BJ (cell line): ENCODE measurements at regions of chr1 and their contacts with region 1.

Region 1: GRCh38 chr1:1943834-1944570 is 24.9 kb upstream of the TMEM52 start:
- DNase-seq: no peak
- H3K4me3 ChIP-seq: no peak overlapping the region
- H3K27me3 ChIP-seq: peaks cover 3% of the 10 kb centered on the region; the same call in 1 of the 2 replicates
- CTCF ChIP-seq: peak; percentile 88

Region 2: DNA sequence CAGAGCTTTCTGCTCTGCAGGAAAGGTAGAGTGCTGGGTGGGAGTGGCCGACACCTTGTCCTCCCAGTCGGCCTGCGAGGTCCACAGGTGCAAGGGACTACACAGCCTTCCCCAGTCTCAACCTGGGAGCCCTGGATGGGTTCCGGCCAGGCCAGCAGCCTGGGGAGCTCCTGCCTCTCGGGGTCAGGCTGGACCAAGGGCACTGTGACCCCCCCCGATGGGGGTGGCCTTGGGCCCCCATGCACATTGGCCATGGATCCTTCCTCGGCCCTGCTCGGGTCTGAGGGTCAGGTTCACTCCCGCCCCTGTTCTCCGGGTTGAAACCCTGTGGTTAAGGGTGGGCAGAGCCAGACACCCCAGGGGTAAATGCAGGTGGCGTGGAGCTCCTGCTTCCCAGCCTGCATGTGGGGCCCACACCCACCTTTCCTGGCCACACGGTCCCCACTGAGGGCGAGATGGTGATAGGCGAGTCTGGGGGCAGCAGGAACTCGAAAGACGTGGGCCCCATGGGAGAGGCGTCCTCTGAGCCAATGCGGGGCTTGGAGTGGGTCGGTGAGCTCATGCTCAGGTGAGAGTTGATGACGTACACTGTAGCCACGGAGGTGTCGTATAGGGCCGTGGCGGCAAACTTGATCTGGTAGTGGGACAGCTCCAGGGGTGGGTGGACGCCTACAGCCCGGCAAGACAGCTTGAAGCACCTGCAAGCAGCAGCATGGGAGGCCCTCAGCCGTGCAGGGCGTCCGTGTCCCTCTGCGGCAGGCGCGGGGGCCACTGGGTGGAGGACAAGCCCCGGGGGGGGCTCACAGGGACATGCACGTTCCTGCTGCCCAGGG is 14.1 kb before region 1 on chr1:
- CTCF ChIA-PET with region 1: interaction called, 11 read pairs
- POLR2A ChIA-PET with region 1: no interaction called
- DNase-seq: no peak
- H3K4me3 ChIP-seq: no peak overlapping the region
- H3K27me3 ChIP-seq: no peaks in the 10 kb centered on the region
- CTCF ChIP-seq: no peak

Region 3: DNA sequence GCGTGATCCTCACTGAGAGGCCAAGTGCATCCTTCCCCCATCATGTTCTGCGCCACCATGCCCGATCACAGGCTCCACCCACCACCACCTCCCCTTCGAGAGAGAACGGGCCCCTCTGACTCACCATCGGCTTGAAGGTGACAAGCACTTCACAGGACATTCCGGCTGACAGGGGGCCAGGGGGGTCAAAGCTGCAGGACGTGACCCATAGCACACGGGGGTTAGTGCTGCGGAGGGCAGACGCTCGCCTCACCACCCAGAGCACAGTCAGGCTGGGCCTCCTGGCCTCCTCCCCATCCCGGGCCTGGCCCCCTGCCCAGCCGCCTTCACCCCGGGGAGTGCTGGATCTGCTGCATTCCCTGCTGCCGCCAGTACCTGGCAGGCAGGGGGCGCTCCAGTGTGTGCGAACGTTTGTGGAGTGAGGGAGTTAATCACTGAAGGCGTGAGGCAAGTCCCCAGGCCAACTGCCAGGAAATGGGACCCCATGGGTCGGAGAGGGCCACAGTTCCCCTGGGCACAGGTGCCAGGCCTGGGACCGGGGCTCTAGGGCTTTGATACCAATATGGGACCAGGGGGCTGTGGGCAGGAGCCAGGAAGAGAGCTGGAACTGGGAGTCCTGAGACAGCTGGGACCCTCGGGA is 16.0 kb after region 1 on chr1:
- CTCF ChIA-PET with region 1: interaction called, 16 read pairs
- POLR2A ChIA-PET with region 1: no interaction called
- DNase-seq: no peak
- H3K4me3 ChIP-seq: no peak overlapping the region
- H3K27me3 ChIP-seq: peaks cover 10% of the 10 kb centered on the region
- CTCF ChIP-seq: peak; percentile 80